K562 (cell line): ENCODE measurements at regions of chr9 and their contacts with region 1.

Region 1: GRCh38 chr9:128339771-128340690 is at the start of gene SLC27A4:
- DNase-seq: peak; percentile 94 to 97 (median 96)
- ATAC-seq: peak; percentile 94
- H3K4me3 ChIP-seq: peak within 1 kb of the TSS; percentile 52
- H3K27ac ChIP-seq: peak within 1 kb of the TSS; percentile 62
- H3K4me1 ChIP-seq: peaks cover 10 to 19% of the 10 kb centered on the region in 2 experiments; a peak in 4 of 5 replicates
- H3K27me3 ChIP-seq: no peaks in the 10 kb centered on the region
- CTCF ChIP-seq: peak in 2 of 3 experiments; percentile 3 to 10; a peak in 3 of 6 replicates
- EP300 ChIP-seq: peak; percentile 50
- POLR2A ChIP-seq: peak; percentile 79
- RAD21 ChIP-seq: peak; percentile 13 to 30; a peak in 2 of 4 replicates
- polyA plus RNA-seq, gene SLC27A4: 0.25 to 0.92 TPM

Region 2: DNA sequence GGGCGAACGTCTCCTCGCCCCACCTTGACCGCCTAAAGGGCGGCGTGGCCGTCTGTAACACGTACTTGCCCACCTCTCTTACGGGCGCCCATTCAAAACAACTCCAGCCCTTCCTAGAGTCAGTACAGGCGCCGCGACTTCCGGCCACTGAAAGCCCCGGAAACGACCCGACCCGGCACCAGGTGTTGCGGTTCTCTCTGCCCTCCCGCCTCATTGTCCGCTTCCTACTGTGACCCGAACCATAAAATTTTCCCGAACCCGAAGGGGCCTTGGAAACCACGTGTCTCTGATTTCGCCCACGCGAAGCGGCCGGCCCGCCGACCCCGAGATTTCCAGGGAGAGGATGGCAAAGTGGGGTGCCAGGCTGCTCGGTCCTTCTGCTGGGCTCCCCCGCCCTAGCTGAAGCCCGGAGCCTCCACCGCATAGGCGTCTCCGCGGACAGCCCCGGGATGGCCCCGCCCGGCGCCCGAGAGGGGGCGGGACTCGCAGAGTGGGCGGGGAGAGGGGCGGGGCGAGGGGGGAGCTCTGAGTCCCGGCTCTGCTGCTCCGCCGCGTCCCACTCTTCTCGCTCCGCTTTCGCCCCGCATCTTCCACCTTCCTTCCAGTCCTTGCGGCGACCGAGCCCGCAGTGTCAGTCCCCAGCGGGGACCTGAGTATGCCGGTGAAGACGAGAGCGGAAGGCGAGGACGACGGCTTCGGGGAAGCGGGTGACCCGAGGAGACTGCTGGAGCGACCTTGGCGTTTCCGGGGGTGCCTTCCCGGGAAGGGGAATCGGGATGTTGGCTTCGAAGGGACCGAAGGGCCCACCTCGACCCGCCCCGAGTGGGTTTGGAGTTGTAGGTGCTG is 211.8 kb before region 1 on chr9:
- CTCF ChIA-PET with region 1: no interaction called
- POLR2A ChIA-PET with region 1: interaction called, 4 read pairs
- in situ Hi-C with region 1: no loop called
- intact Hi-C with region 1: loop called (anchors 1 kb)
- DNase-seq: peak; percentile 89 to 93 (median 90)
- ATAC-seq: peak; percentile 82
- H3K4me3 ChIP-seq: peak overlapping the region; percentile 98
- H3K27ac ChIP-seq: peak overlapping the region; percentile 93
- H3K4me1 ChIP-seq: peaks cover 10 to 38% of the 10 kb centered on the region in 2 experiments
- H3K27me3 ChIP-seq: no peaks in the 10 kb centered on the region
- CTCF ChIP-seq: no peak
- EP300 ChIP-seq: no peak
- POLR2A ChIP-seq: peak; percentile 71; the same call in 1 of the 2 replicates
- RAD21 ChIP-seq: no peak

Region 3: GRCh38 chr9:128182893-128183588 is 157.0 kb before region 1 on chr9:
- CTCF ChIA-PET with region 1: no interaction called
- POLR2A ChIA-PET with region 1: no interaction called
- in situ Hi-C with region 1: no loop called
- intact Hi-C with region 1: loop called (anchors 2 kb)
- DNase-seq: no peak
- ATAC-seq: peak; percentile 9
- H3K4me3 ChIP-seq: no peak overlapping the region
- H3K27ac ChIP-seq: no peak overlapping the region
- H3K4me1 ChIP-seq: peaks cover 10 to 22% of the 10 kb centered on the region in 2 experiments; a peak in 4 of 5 replicates
- H3K27me3 ChIP-seq: no peaks in the 10 kb centered on the region
- CTCF ChIP-seq: no peak
- EP300 ChIP-seq: no peak
- POLR2A ChIP-seq: no peak
- RAD21 ChIP-seq: no peak

Region 4: GRCh38 chr9:128218518-128219389 is 121.3 kb before region 1 on chr9:
- CTCF ChIA-PET with region 1: no interaction called
- POLR2A ChIA-PET with region 1: interaction called, 4 read pairs
- in situ Hi-C with region 1: no loop called
- intact Hi-C with region 1: loop called (anchors 10 kb)
- DNase-seq: peak; percentile 100
- ATAC-seq: peak; percentile 98
- H3K4me3 ChIP-seq: peak overlapping the region; percentile 26
- H3K27ac ChIP-seq: peak overlapping the region; percentile 43
- H3K4me1 ChIP-seq: peaks cover 17 to 62% of the 10 kb centered on the region in 2 experiments
- H3K27me3 ChIP-seq: no peaks in the 10 kb centered on the region
- CTCF ChIP-seq: peak; percentile 23 to 39 (median 28); a peak in 4 of 6 replicates
- EP300 ChIP-seq: peak; percentile 63
- POLR2A ChIP-seq: peak; percentile 78
- RAD21 ChIP-seq: no peak

Region 5: DNA sequence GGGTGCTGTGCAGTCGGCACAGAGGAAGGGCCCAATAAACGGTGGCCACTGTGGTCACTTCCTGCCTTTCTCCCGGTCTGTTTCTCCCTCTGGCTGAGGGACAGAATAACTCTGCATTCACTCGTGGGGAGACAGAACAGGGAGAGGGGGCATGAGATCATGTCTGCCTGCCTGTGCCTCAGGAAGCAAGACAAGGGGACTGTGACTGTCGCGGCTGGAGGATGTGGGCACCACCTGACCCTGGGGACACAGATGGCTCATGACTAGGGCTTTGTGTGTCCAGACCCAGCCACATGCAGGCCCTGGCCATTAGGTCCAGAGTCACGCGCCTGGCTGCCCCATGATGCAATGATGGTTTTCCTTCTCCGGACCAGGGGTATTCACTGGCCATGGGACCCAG is 23.6 kb before region 1 on chr9:
- CTCF ChIA-PET with region 1: no interaction called
- POLR2A ChIA-PET with region 1: interaction called, 19 read pairs
- in situ Hi-C with region 1: no loop called
- intact Hi-C with region 1: no loop called
- DNase-seq: no peak
- ATAC-seq: no peak
- H3K4me3 ChIP-seq: no peak overlapping the region
- H3K27ac ChIP-seq: no peak overlapping the region; the same call in 2 of the 3 replicates
- H3K4me1 ChIP-seq: peaks cover 3 to 6% of the 10 kb centered on the region in 2 experiments
- H3K27me3 ChIP-seq: no peaks in the 10 kb centered on the region
- CTCF ChIP-seq: no peak
- EP300 ChIP-seq: no peak
- POLR2A ChIP-seq: no peak
- RAD21 ChIP-seq: no peak

Region 6: DNA sequence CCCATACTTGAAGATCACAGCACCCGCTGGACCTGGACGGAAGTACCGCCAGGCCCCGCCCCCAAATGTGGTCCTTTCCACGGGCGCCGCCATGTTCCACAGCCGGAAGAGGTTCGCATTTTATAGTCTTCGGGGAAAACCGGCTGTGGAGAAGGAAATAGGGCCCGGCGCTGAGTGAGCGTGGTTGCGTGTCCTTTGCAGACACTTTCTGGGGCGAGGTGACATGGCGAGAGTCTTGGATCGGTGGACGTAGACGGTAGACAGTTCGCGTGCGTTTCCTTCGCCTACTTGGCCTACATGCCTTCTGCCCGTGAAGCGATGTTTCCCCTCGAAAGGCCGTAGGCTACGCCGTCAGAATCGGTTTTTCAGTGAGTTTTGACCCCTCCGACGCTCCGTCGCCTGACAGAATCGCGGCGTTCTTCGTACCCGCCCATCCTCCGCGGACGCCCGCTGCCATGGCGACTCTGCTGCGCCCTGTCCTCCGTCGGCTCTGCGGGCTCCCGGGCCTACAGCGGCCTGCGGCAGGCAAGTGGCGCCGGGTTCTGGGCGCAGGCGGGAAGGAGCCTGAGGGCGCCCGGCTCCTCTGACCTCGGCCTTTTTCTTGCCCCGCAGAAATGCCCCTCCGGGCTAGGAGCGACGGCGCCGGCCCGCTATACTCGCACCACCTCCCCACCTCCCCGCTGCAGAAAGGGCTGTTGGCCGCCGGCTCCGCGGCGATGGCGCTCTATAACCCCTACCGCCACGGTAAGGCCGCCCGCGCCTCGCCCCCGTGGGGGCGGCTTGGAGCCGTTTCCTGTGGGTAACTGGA is 17.4 kb before region 1 on chr9 and contains the starts of genes COQ4 and TRUB2:
- CTCF ChIA-PET with region 1: no interaction called
- POLR2A ChIA-PET with region 1: interaction called, 51 read pairs
- in situ Hi-C with region 1: no loop called
- intact Hi-C with region 1: no loop called
- DNase-seq: peak; percentile 98 to 100 (median 100)
- ATAC-seq: peak; percentile 95
- H3K4me3 ChIP-seq: peak within 1 kb of the TSS; percentile 67
- H3K27ac ChIP-seq: peak within 1 kb of the TSS; percentile 94
- H3K4me1 ChIP-seq: peaks cover 8 to 19% of the 10 kb centered on the region in 2 experiments
- H3K27me3 ChIP-seq: no peaks in the 10 kb centered on the region
- CTCF ChIP-seq: peak in 2 of 3 experiments; percentile 32 to 37; a peak in 4 of 6 replicates
- EP300 ChIP-seq: peak; percentile 66
- POLR2A ChIP-seq: no peak
- RAD21 ChIP-seq: peak; percentile 21 to 45
- polyA plus RNA-seq, gene COQ4: 9.1 to 11.3 TPM
- polyA plus RNA-seq, gene TRUB2: 9.3 to 24.2 TPM

Region 7: GRCh38 chr9:128696923-128697707 is 357.1 kb after region 1 on chr9:
- CTCF ChIA-PET with region 1: no interaction called
- POLR2A ChIA-PET with region 1: interaction called, 65 read pairs
- in situ Hi-C with region 1: loop called (anchors 5 kb)
- intact Hi-C with region 1: no loop called
- DNase-seq: no peak
- ATAC-seq: peak; percentile 49
- H3K4me3 ChIP-seq: no peak overlapping the region
- H3K27ac ChIP-seq: peak overlapping the region; percentile 33; the same call in 1 of the 3 replicates
- H3K4me1 ChIP-seq: peaks cover 0 to 5% of the 10 kb centered on the region in 2 experiments; a peak in 2 of 5 replicates
- H3K27me3 ChIP-seq: no peaks in the 10 kb centered on the region
- CTCF ChIP-seq: no peak
- EP300 ChIP-seq: no peak
- POLR2A ChIP-seq: peak; percentile 73
- RAD21 ChIP-seq: no peak